HEK293 (cell line): ENCODE measurements at regions of chr12 and their contacts with region 1.

Region 1: GRCh38 chr12:52221912-52222457 is 11.1 kb upstream of the KRT7 start:
- H3K4me3 ChIP-seq: no peak overlapping the region
- H3K27ac ChIP-seq: no peak overlapping the region
- H3K4me1 ChIP-seq: no peaks in the 10 kb centered on the region
- CTCF ChIP-seq: peak; percentile 60

Region 2: GRCh38 chr12:52010152-52010622 is 211.8 kb before region 1 on chr12:
- CTCF ChIA-PET with region 1: no interaction called
- POLR2A ChIA-PET with region 1: no interaction called
- H3K4me3 ChIP-seq: no peak overlapping the region
- H3K27ac ChIP-seq: peak overlapping the region; percentile 45
- H3K4me1 ChIP-seq: peaks cover 12% of the 10 kb centered on the region; the same call in 1 of the 2 replicates
- CTCF ChIP-seq: peak; percentile 9; the same call in 1 of the 2 replicates

Region 3: GRCh38 chr12:52207895-52208294 is 14.1 kb before region 1 on chr12:
- CTCF ChIA-PET with region 1: interaction called, 17 read pairs
- POLR2A ChIA-PET with region 1: no interaction called
- H3K4me3 ChIP-seq: no peak overlapping the region
- H3K27ac ChIP-seq: no peak overlapping the region
- H3K4me1 ChIP-seq: peaks cover 8% of the 10 kb centered on the region; the same call in 1 of the 2 replicates
- CTCF ChIP-seq: no peak

Region 4: GRCh38 chr12:52235822-52236692 is 14.1 kb after region 1 on chr12:
- CTCF ChIA-PET with region 1: interaction called, 29 read pairs
- POLR2A ChIA-PET with region 1: no interaction called
- H3K4me3 ChIP-seq: no peak overlapping the region
- H3K27ac ChIP-seq: no peak overlapping the region
- H3K4me1 ChIP-seq: no peaks in the 10 kb centered on the region
- CTCF ChIP-seq: no peak

Region 5: DNA sequence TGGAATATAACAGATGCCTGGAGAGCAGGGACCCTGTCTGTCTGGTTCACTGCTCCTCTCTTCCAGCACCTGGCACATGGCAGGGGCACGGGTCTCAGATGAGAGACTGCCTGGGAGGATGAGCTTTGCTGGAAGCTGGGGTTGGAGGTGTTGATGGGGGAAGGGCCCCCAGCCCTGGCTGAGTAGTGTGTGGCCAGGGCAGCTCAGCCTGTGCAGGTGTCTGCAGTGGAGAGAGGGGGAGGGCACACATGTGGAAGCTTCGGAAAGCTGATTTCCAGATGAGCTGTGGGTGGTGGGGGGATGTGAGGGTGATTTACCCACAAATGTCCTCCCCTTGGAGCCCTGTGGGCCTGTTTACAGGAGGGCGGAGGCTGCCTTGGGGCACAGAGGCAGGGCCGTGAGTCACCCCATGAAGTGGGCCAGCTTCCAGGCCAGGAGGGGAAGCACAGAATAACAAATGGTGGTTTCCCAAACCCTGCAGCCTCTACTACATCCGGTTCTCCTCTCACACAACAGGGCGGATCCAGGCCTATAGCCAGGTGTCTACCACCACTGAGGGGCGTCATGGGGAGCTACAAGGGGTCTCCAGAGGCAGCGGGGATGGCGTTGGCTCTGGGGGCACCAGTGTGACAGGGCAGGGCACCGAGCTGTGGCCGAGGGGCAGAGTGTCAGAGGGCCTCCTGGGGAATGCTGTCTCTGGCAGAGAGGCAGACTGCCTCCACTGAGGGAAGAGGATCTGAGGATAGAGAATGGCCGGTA is 22.1 kb after region 1 on chr12:
- CTCF ChIA-PET with region 1: interaction called, 29 read pairs
- POLR2A ChIA-PET with region 1: no interaction called
- H3K4me3 ChIP-seq: no peak overlapping the region
- H3K27ac ChIP-seq: peak overlapping the region; percentile 39; the same call in 1 of the 2 replicates
- H3K4me1 ChIP-seq: peaks cover 18% of the 10 kb centered on the region
- CTCF ChIP-seq: no peak

Region 6: GRCh38 chr12:52250048-52250990 is 28.3 kb after region 1 on chr12:
- CTCF ChIA-PET with region 1: interaction called, 22 read pairs
- POLR2A ChIA-PET with region 1: no interaction called
- H3K4me3 ChIP-seq: no peak overlapping the region
- H3K27ac ChIP-seq: no peak overlapping the region
- H3K4me1 ChIP-seq: peaks cover 11% of the 10 kb centered on the region; the same call in 1 of the 2 replicates
- CTCF ChIP-seq: no peak

Region 7: DNA sequence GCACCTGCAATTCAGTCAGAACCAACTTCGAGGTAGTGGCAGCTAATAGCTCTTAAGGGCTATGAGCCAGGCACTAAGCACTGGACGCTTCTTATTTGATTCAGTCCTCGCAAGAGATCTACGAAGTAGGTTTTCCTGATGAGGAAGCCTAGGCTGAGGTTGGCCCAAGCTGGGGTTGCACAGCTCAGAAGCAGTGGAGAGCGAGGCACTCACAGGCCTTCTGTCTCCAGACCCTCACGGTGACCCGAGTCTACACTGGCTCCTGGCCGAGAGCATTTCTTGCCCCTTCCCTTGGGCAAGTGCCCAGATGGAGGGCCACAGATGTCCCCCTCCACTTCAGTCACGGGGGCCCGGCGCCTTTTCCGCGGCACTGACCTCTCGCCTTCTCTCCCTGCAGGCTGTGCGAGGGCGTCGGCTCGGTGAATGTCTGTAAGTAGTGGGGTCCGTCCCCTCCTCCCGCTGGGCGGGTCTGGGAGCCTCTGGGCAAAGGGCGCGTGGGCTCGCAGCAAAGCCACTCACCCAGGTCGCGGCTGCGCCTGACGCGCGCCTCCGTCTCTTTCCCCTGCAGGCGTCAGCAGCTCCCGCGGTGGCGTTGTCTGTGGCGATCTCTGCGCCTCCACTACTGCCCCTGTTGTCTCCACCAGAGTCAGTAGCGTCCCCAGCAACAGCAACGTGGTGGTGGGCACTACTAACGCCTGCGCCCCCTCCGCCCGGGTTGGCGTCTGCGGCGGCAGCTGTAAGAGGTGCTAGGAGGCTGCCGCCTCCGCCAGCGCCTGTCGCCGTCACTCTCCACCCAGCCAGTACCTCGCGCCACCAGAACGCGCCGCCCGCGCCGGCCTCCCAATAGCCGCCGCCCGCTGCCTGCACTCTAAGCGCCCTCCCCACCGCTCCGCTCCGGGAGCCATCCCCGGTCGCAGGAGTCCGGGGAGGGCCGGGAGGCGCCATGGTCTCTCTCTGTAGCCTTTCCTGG is 86.1 kb after region 1 on chr12:
- CTCF ChIA-PET with region 1: interaction called, 12 read pairs
- POLR2A ChIA-PET with region 1: no interaction called
- H3K4me3 ChIP-seq: peak overlapping the region; percentile 7
- H3K27ac ChIP-seq: no peak overlapping the region
- H3K4me1 ChIP-seq: no peaks in the 10 kb centered on the region
- CTCF ChIP-seq: peak; percentile 74

Region 8: GRCh38 chr12:52327052-52327829 is 105.3 kb after region 1 on chr12:
- CTCF ChIA-PET with region 1: interaction called, 15 read pairs
- POLR2A ChIA-PET with region 1: no interaction called
- H3K4me3 ChIP-seq: no peak overlapping the region
- H3K27ac ChIP-seq: no peak overlapping the region
- H3K4me1 ChIP-seq: no peaks in the 10 kb centered on the region
- CTCF ChIP-seq: peak; percentile 97